ENCODE measurements at regions of chrX and their contacts with region 1.

Region 1: GRCh38 chrX:131704136-131704695 is 160.3 kb downstream of the OR13H1 start:
- DNase-seq: no peak
- ATAC-seq: no peak
- H3K4me3 ChIP-seq: peak overlapping the region in 2 of 4 donors; percentile 54 to 66
- H3K27ac ChIP-seq: peak overlapping the region in 2 of 4 donors; percentile 49 to 69
- H3K4me1 ChIP-seq: no peaks in the 10 kb centered on the region
- H3K27me3 ChIP-seq: no peaks in the 10 kb centered on the region
- CTCF ChIP-seq: peak in 3 of 5 experiments; percentile 53 to 75 (median 65)
- POLR2A ChIP-seq: no peak

Region 2: DNA sequence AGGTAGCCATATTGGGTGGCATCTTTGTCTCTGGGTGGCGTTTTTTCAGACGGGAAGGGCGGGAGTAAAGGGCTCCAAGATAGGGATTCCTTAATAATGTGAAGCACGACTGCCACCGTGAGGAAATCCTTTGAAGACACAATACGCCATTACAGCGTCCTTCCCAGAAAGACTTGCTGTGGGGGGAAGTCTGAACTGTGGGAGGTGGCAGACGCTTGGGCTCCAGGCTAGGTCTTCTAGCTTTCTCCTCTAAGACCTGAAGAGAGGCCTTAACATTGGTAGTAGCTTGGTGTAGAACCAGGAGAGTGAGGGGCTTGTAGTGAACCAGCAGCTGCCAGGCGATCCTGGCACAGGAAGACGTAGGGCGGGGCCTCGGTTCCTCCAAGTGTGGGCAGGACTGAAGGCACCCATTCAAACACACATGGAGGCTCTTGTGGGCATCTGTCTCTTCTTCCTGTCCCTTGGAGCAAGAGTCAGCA is 36.9 kb after region 1 on chrX:
- in situ Hi-C with region 1: no loop called
- intact Hi-C with region 1: loop called (anchors 1 kb)
- DNase-seq: no peak
- ATAC-seq: no peak
- H3K4me3 ChIP-seq: peak overlapping the region in 2 of 4 donors; percentile 58 to 62
- H3K27ac ChIP-seq: peak overlapping the region in 2 of 4 donors; percentile 73 to 81
- H3K4me1 ChIP-seq: no peaks in the 10 kb centered on the region
- H3K27me3 ChIP-seq: no peaks in the 10 kb centered on the region
- CTCF ChIP-seq: peak in 3 of 5 experiments; percentile 43 to 56 (median 46)
- POLR2A ChIP-seq: no peak

Region 3: DNA sequence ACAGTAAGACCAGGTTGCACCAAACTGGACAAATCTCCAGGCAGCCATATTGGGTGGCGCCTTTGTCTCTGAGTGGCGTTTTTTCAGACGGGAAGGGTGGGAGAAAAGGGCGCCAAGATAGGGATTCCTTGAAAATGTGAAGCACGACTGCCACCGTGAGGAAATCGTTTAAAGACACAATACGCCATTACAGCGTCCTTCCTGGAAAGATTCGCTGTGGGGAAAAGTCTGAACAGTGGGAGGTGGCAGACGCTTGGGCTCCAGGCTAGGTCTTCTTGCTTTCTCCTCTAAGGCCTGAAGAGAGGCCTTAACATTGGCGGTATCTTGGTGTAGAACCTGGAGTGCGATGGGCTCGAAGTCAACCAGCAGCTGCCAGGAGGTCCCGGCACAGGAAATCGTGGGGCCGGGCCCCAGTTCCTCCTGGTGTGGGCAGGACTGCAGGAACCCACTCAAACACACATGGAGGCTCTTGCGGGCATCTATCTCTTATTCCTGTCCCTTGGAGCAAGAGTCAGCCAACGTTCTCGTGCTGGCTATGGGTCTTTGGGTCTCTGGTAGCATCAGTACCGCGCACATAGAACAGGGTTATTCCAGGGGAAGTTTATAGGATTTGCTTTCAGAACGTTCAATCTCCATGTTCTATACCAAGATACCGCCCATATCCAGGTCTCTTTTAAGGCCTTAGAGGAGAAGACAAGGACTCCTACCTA is 48.4 kb after region 1 on chrX:
- in situ Hi-C with region 1: no loop called
- intact Hi-C with region 1: loop called (anchors 1 kb)
- DNase-seq: no peak
- ATAC-seq: no peak
- H3K4me3 ChIP-seq: peak overlapping the region in 2 of 4 donors; percentile 64
- H3K27ac ChIP-seq: peak overlapping the region in 2 of 4 donors; percentile 70 to 78
- H3K4me1 ChIP-seq: peaks cover 0 to 5% of the 10 kb centered on the region in 2 donors
- H3K27me3 ChIP-seq: no peaks in the 10 kb centered on the region
- CTCF ChIP-seq: peak in 1 of 5 experiments; percentile 25
- POLR2A ChIP-seq: no peak